Sciatic nerve (tissue), 2 donors: ENCODE measurements at regions of chr10 and their contacts with region 1.

Region 1: GRCh38 chr10:34933676-34934075 is 118.6 kb upstream of the PARD3 start:
- DNase-seq: no peak
- ATAC-seq: peak; percentile 87

Region 2: GRCh38 chr10:33095867-33096815 is 1837.5 kb before region 1 on chr10:
- intact Hi-C with region 1: no loop called
- DNase-seq: no peak
- ATAC-seq: no peak

Region 3: GRCh38 chr10:34710391-34710751 is 223.3 kb before region 1 on chr10:
- intact Hi-C with region 1: no loop called
- DNase-seq: no peak
- ATAC-seq: peak; percentile 87

Region 4: DNA sequence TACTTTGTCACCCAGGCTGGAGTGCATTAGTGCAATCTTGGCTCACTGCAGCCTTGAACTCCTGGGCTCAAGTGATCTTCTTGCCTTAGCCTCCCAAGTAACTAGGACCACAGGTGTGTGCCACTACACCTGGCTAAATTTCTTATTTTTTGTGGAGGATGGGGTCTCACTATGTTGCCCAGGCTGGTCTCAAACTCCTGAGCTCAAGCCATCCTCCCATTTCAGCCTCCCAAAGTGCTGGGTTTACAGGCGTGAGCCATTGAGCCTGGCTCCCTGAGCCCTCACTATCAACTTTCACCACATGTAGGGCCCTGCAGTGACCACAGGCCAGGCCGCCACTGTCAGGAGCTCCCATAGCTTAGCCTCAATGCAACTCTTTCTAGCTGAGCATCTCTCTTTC is 46.3 kb after region 1 on chr10:
- intact Hi-C with region 1: loop called (anchors 1 kb)
- DNase-seq: no peak
- ATAC-seq: no peak